Esophagus muscularis mucosa (tissue), 4 donors: ENCODE measurements at regions of chr16 and their contacts with region 1.

Region 1: GRCh38 chr16:49617016-49617629 is 238.8 kb downstream of the ZNF423 start:
- DNase-seq: no peak
- H3K4me3 ChIP-seq: no peak overlapping the region
- H3K27ac ChIP-seq: no peak overlapping the region
- H3K4me1 ChIP-seq: peaks cover 21 to 24% (median 23%) of the 10 kb centered on the region in 4 donors
- H3K27me3 ChIP-seq: no peaks in the 10 kb centered on the region
- CTCF ChIP-seq: no peak
- EP300 ChIP-seq: no peak
- POLR2A ChIP-seq: no peak

Region 2: GRCh38 chr16:49661465-49662187 is 44.5 kb after region 1 on chr16:
- intact Hi-C with region 1: no loop called
- DNase-seq: no peak
- H3K4me3 ChIP-seq: no peak overlapping the region
- H3K27ac ChIP-seq: peak overlapping the region in 1 of 4 donors; percentile 51
- H3K4me1 ChIP-seq: peaks cover 21 to 63% (median 49%) of the 10 kb centered on the region in 4 donors
- H3K27me3 ChIP-seq: no peaks in the 10 kb centered on the region
- CTCF ChIP-seq: no peak
- EP300 ChIP-seq: no peak
- POLR2A ChIP-seq: no peak

Region 3: DNA sequence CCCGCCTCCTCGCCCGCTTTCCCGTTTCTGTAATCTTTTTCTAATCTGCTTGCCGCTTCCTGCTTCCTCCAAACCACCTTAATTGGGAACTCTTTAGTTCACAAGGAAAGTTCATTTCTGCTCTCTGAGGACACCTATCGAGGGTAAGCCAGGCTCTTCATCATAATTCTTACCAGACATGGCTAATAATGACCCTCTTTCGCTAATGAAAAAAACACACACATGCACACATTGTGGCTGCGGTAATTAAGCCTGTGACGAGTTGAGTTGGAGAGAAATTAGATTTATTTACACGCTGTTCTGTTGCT is 138.1 kb after region 1 on chr16:
- intact Hi-C with region 1: loop called (anchors 10 kb)
- DNase-seq: no peak
- H3K4me3 ChIP-seq: peak overlapping the region; percentile 51 to 60 (median 56)
- H3K27ac ChIP-seq: peak overlapping the region; percentile 64 to 74 (median 70)
- H3K4me1 ChIP-seq: peaks cover 30 to 42% (median 31%) of the 10 kb centered on the region in 4 donors
- H3K27me3 ChIP-seq: no peaks in the 10 kb centered on the region
- CTCF ChIP-seq: peak; percentile 44 to 59 (median 51)
- EP300 ChIP-seq: no peak
- POLR2A ChIP-seq: no peak